Ascending aorta (tissue), 2 donors: ENCODE measurements at regions of chr11 and their contacts with region 1.

Region 1: DNA sequence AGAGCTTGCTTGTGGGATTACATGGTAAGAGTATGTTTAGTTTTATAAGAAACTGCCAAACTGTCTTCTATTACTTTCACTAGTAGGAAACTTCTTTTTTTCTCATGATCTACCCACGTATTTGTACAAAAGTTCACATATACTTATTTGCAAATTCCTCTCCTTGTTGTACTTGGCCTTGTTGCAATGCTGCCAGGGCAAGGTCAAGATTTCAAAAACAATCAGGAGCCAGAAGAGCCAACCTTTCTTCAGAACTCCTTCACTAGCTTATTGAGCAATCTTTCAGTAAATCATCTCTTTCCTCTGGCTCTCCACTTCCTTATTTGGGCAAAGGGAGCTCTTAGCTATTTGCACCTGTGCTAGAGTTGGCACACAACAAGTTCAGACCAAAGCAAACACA is 9.7 kb downstream of the SRSF8 start:
- DNase-seq: peak in 1 of 2 donors; percentile 84
- H3K4me3 ChIP-seq: no peak overlapping the region
- H3K27ac ChIP-seq: peak overlapping the region; percentile 80 to 85
- H3K4me1 ChIP-seq: peaks cover 15 to 46% of the 10 kb centered on the region in 2 donors
- H3K27me3 ChIP-seq: no peaks in the 10 kb centered on the region
- CTCF ChIP-seq: no peak

Region 2: GRCh38 chr11:94142308-94143281 is 933.8 kb before region 1 on chr11:
- intact Hi-C with region 1: loop called (anchors 10 kb)
- DNase-seq: no peak
- H3K4me3 ChIP-seq: no peak overlapping the region
- H3K27ac ChIP-seq: peak overlapping the region in 1 of 2 donors; percentile 14
- H3K4me1 ChIP-seq: peaks cover 0 to 17% of the 10 kb centered on the region in 2 donors
- H3K27me3 ChIP-seq: no peaks in the 10 kb centered on the region
- CTCF ChIP-seq: no peak

Region 3: DNA sequence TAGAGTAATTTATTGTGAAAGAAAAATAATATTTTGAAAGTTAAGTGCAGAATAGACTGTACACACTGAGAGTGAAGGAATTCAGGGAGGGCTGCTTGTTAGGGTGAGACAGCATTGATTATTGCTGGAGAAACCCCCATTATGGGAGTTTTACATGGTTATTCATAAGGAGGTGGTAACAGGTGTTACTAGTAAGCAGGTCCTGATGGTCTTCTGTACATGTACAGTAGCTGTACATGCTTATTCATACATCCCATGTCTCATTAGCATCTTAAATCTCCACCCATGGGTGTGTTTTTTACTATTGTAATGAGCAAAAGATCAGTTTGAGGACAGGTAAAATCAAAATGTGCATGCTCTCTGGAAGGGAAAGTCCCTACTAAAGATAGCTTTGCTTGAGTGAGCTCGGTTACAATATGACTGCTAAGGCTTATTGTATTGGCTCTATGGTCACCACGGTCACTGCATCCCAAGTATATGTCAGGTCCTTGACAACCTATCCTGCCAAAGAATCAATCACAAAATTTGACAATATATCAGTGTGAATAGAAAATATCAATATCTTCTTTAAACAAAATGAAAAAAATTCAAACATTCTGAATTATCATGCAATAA is 21.0 kb before region 1 on chr11:
- intact Hi-C with region 1: no loop called
- DNase-seq: no peak
- H3K4me3 ChIP-seq: no peak overlapping the region
- H3K27ac ChIP-seq: no peak overlapping the region
- H3K4me1 ChIP-seq: no peaks in the 10 kb centered on the region
- H3K27me3 ChIP-seq: no peaks in the 10 kb centered on the region
- CTCF ChIP-seq: no peak

Region 4: DNA sequence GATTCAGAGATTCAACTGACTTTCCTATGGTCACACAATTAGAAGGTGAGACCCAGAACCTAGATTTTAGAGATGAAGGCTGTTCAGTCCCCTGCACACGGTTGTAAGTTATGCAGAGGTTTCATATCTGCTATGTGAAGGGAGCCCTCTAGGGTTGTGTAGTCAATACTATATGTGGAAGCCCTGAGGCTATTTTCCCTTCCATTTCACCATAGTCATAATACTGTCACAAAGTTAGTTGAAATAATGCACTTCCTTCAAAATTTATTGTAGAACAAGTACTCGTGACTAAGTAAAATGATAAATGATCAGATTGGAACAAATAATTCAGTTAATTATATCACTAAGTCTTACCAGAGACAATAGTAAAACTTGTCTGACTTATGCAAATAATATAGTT is 62.0 kb after region 1 on chr11:
- intact Hi-C with region 1: no loop called
- DNase-seq: no peak
- H3K4me3 ChIP-seq: no peak overlapping the region
- H3K27ac ChIP-seq: no peak overlapping the region
- H3K4me1 ChIP-seq: no peaks in the 10 kb centered on the region
- H3K27me3 ChIP-seq: no peaks in the 10 kb centered on the region
- CTCF ChIP-seq: peak in 2 of 3 experiments; percentile 29 to 37